ENCODE measurements at regions of chr15 and their contacts with region 1.

Region 1: DNA sequence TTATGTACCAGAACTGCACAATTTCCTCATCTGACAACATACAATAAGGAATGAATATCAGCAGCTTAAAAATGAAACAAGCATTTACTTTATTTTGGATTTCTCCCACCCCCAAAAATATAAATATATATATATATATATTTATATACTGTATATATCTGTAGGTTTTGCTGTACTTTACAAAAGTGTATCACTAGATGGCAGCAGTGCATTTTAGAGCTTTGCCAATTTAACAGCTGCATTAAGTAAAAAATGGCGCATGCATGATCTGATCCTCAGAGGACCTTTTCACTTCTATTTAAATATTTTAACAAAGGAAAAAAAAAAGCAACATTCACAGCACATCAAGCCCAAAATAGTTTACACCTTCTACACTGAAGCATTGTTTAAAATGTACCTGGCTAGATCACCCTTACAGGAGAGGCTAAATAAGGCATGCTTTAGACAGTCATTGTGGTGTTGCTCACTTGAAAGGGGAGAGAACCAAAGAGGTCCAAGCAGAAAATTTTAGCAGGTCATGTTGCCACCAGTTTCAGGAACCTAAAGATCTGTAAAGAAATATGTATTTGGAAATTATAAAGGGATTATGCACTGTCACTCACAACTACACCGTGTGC is 72.6 kb downstream of the NPTN start:
- DNase-seq: no peak
- ATAC-seq: peak; percentile 53 to 89 (median 82)
- H3K4me3 ChIP-seq: no peak overlapping the region
- H3K27ac ChIP-seq: no peak overlapping the region
- H3K4me1 ChIP-seq: no peaks in the 10 kb centered on the region
- H3K27me3 ChIP-seq: no peaks in the 10 kb centered on the region
- CTCF ChIP-seq: peak in 2 of 4 donors; percentile 22 to 24

Region 2: GRCh38 chr15:73617301-73617831 is 56.8 kb after region 1 on chr15:
- intact Hi-C with region 1: no loop called
- DNase-seq: no peak
- ATAC-seq: no peak
- H3K4me3 ChIP-seq: no peak overlapping the region
- H3K27ac ChIP-seq: no peak overlapping the region
- H3K4me1 ChIP-seq: peaks cover 11 to 19% (median 12%) of the 10 kb centered on the region in 3 donors
- H3K27me3 ChIP-seq: no peaks in the 10 kb centered on the region
- CTCF ChIP-seq: no peak

Region 3: GRCh38 chr15:73637527-73637926 is 76.9 kb after region 1 on chr15:
- intact Hi-C with region 1: loop called in 2 of 3 experiments (anchors 5 kb)
- DNase-seq: no peak
- ATAC-seq: no peak
- H3K4me3 ChIP-seq: no peak overlapping the region
- H3K27ac ChIP-seq: no peak overlapping the region
- H3K4me1 ChIP-seq: peaks cover 0 to 6% (median 0%) of the 10 kb centered on the region in 3 donors
- H3K27me3 ChIP-seq: no peaks in the 10 kb centered on the region
- CTCF ChIP-seq: no peak

Region 4: DNA sequence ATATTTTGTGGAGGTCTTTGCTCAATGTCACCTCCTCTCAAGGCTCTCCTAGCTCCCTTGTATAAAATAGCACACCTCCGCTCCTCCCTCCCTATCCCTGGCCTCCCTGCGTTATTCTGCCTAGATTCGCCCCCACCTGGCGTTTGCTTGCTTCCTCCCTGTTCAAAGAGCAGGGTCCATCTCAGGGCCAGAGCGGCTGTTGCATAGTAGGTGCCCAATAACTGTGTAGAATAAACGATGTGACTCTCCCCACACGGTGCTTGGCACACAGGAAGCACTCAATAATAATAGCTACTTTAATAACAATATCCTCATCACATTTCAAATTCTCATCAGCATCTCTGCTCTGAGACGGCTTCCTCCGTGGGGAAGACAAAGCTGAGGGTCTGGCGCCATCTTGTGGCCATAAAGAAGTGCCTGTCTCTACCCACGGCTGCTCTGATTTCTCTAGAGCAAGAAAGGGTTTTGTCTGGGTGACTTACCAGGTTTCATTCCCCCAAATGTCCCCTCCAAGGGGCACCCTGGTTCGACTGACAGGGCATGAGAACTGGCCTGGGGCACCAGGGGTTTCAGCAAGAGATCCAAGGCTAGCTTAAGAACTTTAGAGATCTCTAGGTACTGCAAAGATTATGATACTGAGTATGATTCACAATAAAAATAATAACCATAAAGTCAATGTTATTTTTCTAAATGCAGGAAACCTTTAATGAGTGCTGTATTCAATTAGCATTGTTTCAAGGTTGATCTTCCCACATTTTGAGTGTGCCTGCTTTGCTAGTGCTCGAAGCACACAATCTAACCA is 139.6 kb after region 1 on chr15:
- intact Hi-C with region 1: loop called in 1 of 3 experiments (anchors 10 kb)
- DNase-seq: peak in 5 of 6 donors; percentile 56 to 78 (median 70)
- ATAC-seq: peak; percentile 76 to 84 (median 82)
- H3K4me3 ChIP-seq: no peak overlapping the region
- H3K27ac ChIP-seq: no peak overlapping the region
- H3K4me1 ChIP-seq: no peaks in the 10 kb centered on the region
- H3K27me3 ChIP-seq: no peaks in the 10 kb centered on the region
- CTCF ChIP-seq: peak; percentile 92 to 95 (median 94)

Measured in pancreas (tissue), 10 donors.